HCT116 (cell line): ENCODE measurements at regions of chr17 and their contacts with region 1.

Region 1: DNA sequence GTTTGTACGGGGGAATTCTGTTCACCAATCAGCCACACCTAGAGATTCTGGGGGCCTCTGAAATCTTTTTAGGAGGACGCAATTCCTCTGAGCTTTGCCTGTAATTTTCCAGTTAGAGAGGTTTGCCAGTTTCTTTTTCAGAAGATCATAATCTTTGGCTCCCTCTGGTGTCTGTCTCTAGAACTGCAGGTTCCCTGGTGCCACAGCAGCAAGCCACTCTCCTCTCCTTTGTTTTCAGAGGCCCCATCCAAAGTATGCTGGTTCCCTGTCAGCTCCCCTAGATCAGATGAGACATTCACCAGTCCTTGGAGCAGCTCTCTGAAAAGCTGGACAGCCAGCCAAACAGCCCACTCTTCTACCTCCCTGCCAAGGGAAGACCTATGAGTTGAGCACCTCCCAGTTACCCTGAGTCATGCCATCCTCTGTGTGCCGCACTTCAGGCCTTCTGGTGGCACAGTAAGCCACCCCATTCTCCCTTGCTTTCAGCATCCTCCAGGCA is 36.1 kb downstream of the RNF112 start:
- DNase-seq: peak; percentile 62
- ATAC-seq: peak; percentile 90
- H3K4me3 ChIP-seq: no peak overlapping the region
- H3K27ac ChIP-seq: no peak overlapping the region
- H3K4me1 ChIP-seq: peaks cover 3 to 8% of the 10 kb centered on the region in 2 experiments; a peak in 3 of 4 replicates
- H3K27me3 ChIP-seq: no peaks in the 10 kb centered on the region
- CTCF ChIP-seq: peak; percentile 86 to 92 (median 87)
- POLR2A ChIP-seq: no peak
- RAD21 ChIP-seq: peak; percentile 96

Region 2: DNA sequence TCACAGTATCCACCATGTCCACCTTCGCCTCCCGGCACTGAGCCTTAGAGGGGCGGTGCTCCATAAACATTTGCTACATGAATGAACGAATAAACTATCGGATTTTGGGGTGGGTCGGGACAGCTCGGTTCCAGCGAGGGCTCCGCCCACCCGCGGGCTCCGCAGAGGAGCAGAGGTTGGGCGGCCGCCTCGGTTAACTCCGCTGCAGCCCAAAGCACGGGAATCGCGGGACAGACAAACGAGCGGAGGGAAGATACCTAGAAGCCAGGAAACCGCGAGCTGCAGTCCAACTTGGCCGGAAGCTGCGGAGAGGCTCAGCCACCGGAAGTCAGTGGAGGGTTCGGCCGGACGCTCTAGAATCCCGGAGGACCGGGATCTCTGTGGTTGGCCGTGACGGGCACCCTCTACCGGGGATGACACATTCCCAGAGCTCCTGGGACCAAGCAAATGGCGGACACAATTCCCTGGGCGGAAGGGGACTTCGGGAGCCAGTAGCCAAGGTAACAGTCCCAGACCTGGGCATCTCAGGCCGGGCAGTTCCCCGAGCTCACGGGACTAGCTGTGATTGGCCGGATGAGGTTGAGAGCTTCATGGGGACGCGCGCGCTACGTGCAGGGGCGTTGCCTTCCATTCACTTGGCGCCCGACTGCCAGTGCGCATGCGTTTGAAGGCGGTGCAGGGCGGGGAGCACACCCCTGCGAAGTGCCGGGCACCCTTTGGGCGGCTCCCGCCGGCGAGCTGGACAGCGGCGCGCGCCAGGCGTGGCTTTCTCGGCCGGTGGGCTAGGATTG is 69.3 kb before region 1 on chr17:
- CTCF ChIA-PET with region 1: interaction called, 15 read pairs
- POLR2A ChIA-PET with region 1: no interaction called
- RAD21 ChIA-PET with region 1: interaction called, 4 to 7 read pairs
- intact Hi-C with region 1: loop called (anchors 1 kb)
- DNase-seq: peak; percentile 96
- ATAC-seq: peak; percentile 92
- H3K4me3 ChIP-seq: peak overlapping the region; percentile 67 to 94
- H3K27ac ChIP-seq: peak overlapping the region; percentile 84
- H3K4me1 ChIP-seq: peaks cover 9 to 18% of the 10 kb centered on the region in 2 experiments; a peak in 3 of 4 replicates
- H3K27me3 ChIP-seq: no peaks in the 10 kb centered on the region
- CTCF ChIP-seq: no peak
- POLR2A ChIP-seq: peak; percentile 83
- RAD21 ChIP-seq: no peak

Region 3: GRCh38 chr17:19433727-19434340 is 13.3 kb before region 1 on chr17:
- CTCF ChIA-PET with region 1: interaction called, 10 read pairs
- POLR2A ChIA-PET with region 1: no interaction called
- RAD21 ChIA-PET with region 1: no interaction called
- intact Hi-C with region 1: no loop called
- DNase-seq: no peak
- ATAC-seq: no peak
- H3K4me3 ChIP-seq: no peak overlapping the region
- H3K27ac ChIP-seq: no peak overlapping the region
- H3K4me1 ChIP-seq: no peaks in the 10 kb centered on the region
- H3K27me3 ChIP-seq: no peaks in the 10 kb centered on the region
- CTCF ChIP-seq: no peak
- POLR2A ChIP-seq: no peak
- RAD21 ChIP-seq: 0 out of 2 replicates have a peak, but pooled peaks have one; percentile 8

Region 4: DNA sequence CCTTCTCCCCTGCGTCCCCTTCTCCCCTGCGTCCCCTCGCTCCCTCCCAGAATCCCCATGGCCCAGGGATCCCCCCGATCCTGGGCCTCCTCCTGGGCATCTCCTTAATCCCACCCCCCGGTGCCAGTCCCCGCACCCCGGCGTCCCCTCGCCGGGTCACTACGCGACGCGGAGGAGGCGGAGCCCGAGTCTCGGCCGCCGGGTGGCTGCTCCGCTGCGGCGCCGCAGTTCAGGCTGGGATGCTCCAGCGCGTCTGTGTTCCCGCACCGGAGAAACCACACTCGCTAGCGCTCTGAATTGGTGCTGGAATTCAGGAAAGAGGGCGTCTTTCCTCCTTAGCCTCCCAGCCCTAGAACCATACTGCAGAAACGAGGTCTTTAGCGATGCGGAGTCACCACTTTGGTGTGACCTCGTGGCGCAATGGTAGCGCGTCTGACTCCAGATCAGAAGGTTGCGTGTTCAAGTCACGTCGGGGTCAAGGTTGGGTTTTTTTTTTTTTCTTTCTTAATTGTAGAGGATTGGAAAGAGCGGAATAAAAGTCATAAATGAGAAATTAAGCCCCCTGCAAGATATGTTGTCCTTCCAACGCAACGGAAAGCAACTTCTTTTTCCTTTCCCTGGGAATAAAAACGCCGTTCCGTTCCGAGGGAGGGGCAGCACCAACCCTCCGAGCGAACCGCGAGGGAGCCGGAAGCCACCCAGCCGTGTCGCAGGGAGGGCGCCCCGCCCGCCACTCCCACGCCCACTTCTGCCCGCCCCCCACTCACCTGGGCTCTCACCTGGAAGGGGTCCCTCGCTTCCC is 60.8 kb after region 1 on chr17:
- CTCF ChIA-PET with region 1: no interaction called
- POLR2A ChIA-PET with region 1: no interaction called
- RAD21 ChIA-PET with region 1: no interaction called
- intact Hi-C with region 1: no loop called
- DNase-seq: peak; percentile 69
- ATAC-seq: peak; percentile 87
- H3K4me3 ChIP-seq: peak overlapping the region; percentile 55 to 67
- H3K27ac ChIP-seq: peak overlapping the region; percentile 71
- H3K4me1 ChIP-seq: peaks cover 6 to 15% of the 10 kb centered on the region in 2 experiments; a peak in 3 of 4 replicates
- H3K27me3 ChIP-seq: no peaks in the 10 kb centered on the region
- CTCF ChIP-seq: no peak
- POLR2A ChIP-seq: no peak
- RAD21 ChIP-seq: no peak